ENCODE measurements at regions of chr17 and their contacts with region 1.

Region 1: GRCh38 chr17:37844158-37844976 is 79.8 kb upstream of the TBC1D3K start:
- DNase-seq: peak; percentile 68
- ATAC-seq: peak; percentile 91
- H3K4me3 ChIP-seq: peak overlapping the region; percentile 19 to 75 (median 47)
- H3K4me3 Mint-ChIP-seq: peak overlapping the region; percentile 88
- H3K27ac ChIP-seq: peak overlapping the region; percentile 66 to 76
- H3K27ac Mint-ChIP-seq: peak overlapping the region; percentile 78
- H3K4me1 ChIP-seq: peaks cover 26 to 30% of the 10 kb centered on the region in 2 donors
- H3K4me1 Mint-ChIP-seq: peaks cover 47% of the 10 kb centered on the region
- H3K27me3 ChIP-seq: no peaks in the 10 kb centered on the region
- H3K27me3 Mint-ChIP-seq: no peaks in the 10 kb centered on the region
- CTCF ChIP-seq: peak; percentile 80

Region 2: GRCh38 chr17:37643118-37643766 is 201.1 kb before region 1 on chr17 and contains the start of gene DDX52:
- CTCF ChIA-PET with region 1: no interaction called
- POLR2A ChIA-PET with region 1: no interaction called
- intact Hi-C with region 1: loop called (anchors 1 kb)
- DNase-seq: peak; percentile 93
- ATAC-seq: peak; percentile 99
- H3K4me3 ChIP-seq: peak within 1 kb of the TSS; percentile 62 to 97 (median 85)
- H3K4me3 Mint-ChIP-seq: peak within 1 kb of the TSS; percentile 94
- H3K27ac ChIP-seq: peak within 1 kb of the TSS; percentile 64 to 77
- H3K27ac Mint-ChIP-seq: peak within 1 kb of the TSS; percentile 91
- H3K4me1 ChIP-seq: peaks cover 16 to 17% of the 10 kb centered on the region in 2 donors
- H3K4me1 Mint-ChIP-seq: peaks cover 29% of the 10 kb centered on the region
- H3K27me3 ChIP-seq: peaks cover 0 to 30% (median 17%) of the 10 kb centered on the region in 4 experiments
- H3K27me3 Mint-ChIP-seq: peaks cover 29% of the 10 kb centered on the region
- CTCF ChIP-seq: no peak
- total RNA-seq, gene DDX52: 33.0 and 38.2 TPM in 2 replicates

Region 3: GRCh38 chr17:37826497-37827430 is 17.6 kb before region 1 on chr17:
- CTCF ChIA-PET with region 1: interaction called, 6 read pairs
- POLR2A ChIA-PET with region 1: no interaction called
- intact Hi-C with region 1: loop called (anchors 2 kb)
- DNase-seq: peak; percentile 66
- ATAC-seq: peak; percentile 52
- H3K4me3 ChIP-seq: no peak overlapping the region
- H3K4me3 Mint-ChIP-seq: no peak overlapping the region
- H3K27ac ChIP-seq: no peak overlapping the region
- H3K27ac Mint-ChIP-seq: peak overlapping the region; percentile 3
- H3K4me1 ChIP-seq: peaks cover 63 to 71% of the 10 kb centered on the region in 2 donors
- H3K4me1 Mint-ChIP-seq: peaks cover 69% of the 10 kb centered on the region
- H3K27me3 ChIP-seq: peaks cover 0 to 3% (median 0%) of the 10 kb centered on the region in 4 experiments
- H3K27me3 Mint-ChIP-seq: peaks cover 5% of the 10 kb centered on the region
- CTCF ChIP-seq: no peak

Measured in B cell (primary cell).